ENCODE measurements at regions of chr4 and their contacts with region 1.

Region 1: GRCh38 chr4:91502365-91502764 is 801.4 kb upstream of the GRID2 start:
- DNase-seq: no peak
- ATAC-seq: no peak
- H3K4me3 ChIP-seq: no peak overlapping the region
- H3K4me3 Mint-ChIP-seq: no peak overlapping the region
- H3K27ac ChIP-seq: no peak overlapping the region
- H3K27ac Mint-ChIP-seq: no peak overlapping the region
- H3K4me1 ChIP-seq: no peaks in the 10 kb centered on the region
- H3K4me1 Mint-ChIP-seq: no peaks in the 10 kb centered on the region
- H3K27me3 ChIP-seq: no peaks in the 10 kb centered on the region
- H3K27me3 Mint-ChIP-seq: no peaks in the 10 kb centered on the region
- CTCF ChIP-seq: no peak

Region 2: GRCh38 chr4:91567594-91567993 is 65.2 kb after region 1 on chr4:
- CTCF ChIA-PET with region 1: no interaction called
- POLR2A ChIA-PET with region 1: no interaction called
- intact Hi-C with region 1: loop called in 1 of 2 experiments (anchors 2 kb)
- DNase-seq: no peak
- ATAC-seq: no peak
- H3K4me3 ChIP-seq: no peak overlapping the region
- H3K4me3 Mint-ChIP-seq: no peak overlapping the region
- H3K27ac ChIP-seq: no peak overlapping the region
- H3K27ac Mint-ChIP-seq: no peak overlapping the region
- H3K4me1 ChIP-seq: no peaks in the 10 kb centered on the region
- H3K4me1 Mint-ChIP-seq: no peaks in the 10 kb centered on the region
- H3K27me3 ChIP-seq: no peaks in the 10 kb centered on the region
- H3K27me3 Mint-ChIP-seq: no peaks in the 10 kb centered on the region
- CTCF ChIP-seq: no peak

Measured in CD8-positive, alpha-beta T cell (primary cell).